PC-9 (cell line): ENCODE measurements at regions of chr3 and their contacts with region 1.

Region 1: DNA sequence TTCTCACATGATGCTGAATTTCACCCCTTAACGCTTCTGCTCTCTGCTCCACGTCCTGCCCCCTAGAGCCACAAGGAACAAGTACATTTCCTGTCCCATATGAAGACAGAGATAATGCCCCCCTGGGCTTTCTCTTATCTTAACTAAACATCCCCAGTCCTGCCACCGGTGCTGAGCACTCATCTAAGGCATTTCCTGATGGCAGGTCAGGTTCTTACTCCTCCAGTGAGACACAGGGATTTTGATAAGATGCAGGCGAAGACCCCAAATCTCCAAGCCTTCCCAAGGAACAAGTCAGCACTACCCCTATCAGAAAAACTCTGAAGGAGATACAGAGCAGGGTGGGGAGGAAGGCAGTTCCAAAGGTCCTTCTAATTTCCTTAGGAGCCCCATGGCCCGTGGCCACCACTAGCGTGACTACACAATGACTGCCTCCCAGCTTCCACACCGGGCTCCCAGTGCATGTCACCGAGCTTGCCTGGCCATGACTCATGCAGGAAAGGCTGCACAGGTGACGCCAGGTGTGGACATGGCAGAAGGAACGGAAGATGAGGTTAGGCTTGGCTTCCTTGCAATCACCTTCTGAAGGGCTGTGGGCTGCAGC is 152.9 kb downstream of the XXYLT1 start:
- DNase-seq: peak; percentile 94 to 97
- H3K4me3 ChIP-seq: peak overlapping the region; percentile 23; the same call in 1 of the 2 replicates
- H3K27ac ChIP-seq: peak overlapping the region; percentile 82
- H3K4me1 ChIP-seq: peaks cover 51% of the 10 kb centered on the region
- H3K27me3 ChIP-seq: no peaks in the 10 kb centered on the region
- CTCF ChIP-seq: peak; percentile 63

Region 2: GRCh38 chr3:194486540-194487288 is 631.4 kb before region 1 on chr3 and contains the start of gene ATP13A3:
- CTCF ChIA-PET with region 1: no interaction called
- POLR2A ChIA-PET with region 1: interaction called, 11 read pairs
- intact Hi-C with region 1: no loop called
- DNase-seq: peak; percentile 80 to 93
- H3K4me3 ChIP-seq: peak within 1 kb of the TSS; percentile 64
- H3K27ac ChIP-seq: peak within 1 kb of the TSS; percentile 96
- H3K4me1 ChIP-seq: peaks cover 71% of the 10 kb centered on the region
- H3K27me3 ChIP-seq: no peaks in the 10 kb centered on the region
- CTCF ChIP-seq: no peak
- total RNA-seq, gene ATP13A3: 203 and 242 TPM in 2 replicates

Region 3: GRCh38 chr3:194938804-194939534 is 179.1 kb before region 1 on chr3:
- CTCF ChIA-PET with region 1: no interaction called
- POLR2A ChIA-PET with region 1: interaction called, 15 read pairs
- intact Hi-C with region 1: no loop called
- DNase-seq: no peak
- H3K4me3 ChIP-seq: no peak overlapping the region
- H3K27ac ChIP-seq: no peak overlapping the region
- H3K4me1 ChIP-seq: peaks cover 12% of the 10 kb centered on the region
- H3K27me3 ChIP-seq: no peaks in the 10 kb centered on the region
- CTCF ChIP-seq: no peak

Region 4: DNA sequence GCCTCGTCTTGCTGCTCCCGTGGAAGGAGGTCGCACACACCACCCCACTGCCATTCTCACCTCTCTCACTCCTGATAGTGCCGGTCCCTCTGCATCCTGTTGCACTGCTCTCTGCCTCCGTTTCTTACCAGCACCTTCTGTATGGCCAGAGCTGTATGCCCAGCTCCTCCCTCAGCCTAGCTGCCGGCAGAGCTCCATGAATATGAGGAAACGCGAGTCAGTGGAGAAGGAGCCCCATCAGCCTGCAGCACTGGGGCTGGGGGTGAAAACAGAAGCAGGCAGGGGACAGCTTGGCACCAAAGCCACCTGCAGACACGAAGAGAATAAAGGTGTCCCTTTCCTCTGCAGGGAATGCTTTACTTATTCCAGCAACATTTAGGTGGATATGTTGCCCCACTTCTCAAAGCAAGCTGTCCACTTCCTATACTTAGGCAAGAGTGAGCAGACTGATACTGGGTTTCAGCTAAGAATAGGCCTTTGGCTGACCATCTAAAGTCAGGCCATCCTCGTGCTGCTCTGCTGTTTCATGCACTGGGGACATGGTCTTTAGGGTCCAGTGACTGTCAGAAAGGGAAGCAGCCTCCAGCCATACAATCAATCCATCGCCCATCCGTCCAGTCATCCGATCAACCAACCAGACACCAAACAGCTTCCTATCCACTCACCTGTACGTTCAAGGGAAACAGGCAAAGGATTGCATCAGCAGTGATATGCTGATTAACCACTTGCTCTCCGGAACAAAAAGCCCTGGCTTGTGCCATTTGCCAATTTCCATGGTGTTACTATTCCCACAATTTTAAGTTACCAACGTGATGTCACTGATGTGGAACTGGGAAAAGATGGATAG is 69.8 kb before region 1 on chr3:
- CTCF ChIA-PET with region 1: no interaction called
- POLR2A ChIA-PET with region 1: interaction called, 26 read pairs
- intact Hi-C with region 1: no loop called
- DNase-seq: peak in 1 of 2 experiments; percentile 5
- H3K4me3 ChIP-seq: no peak overlapping the region
- H3K27ac ChIP-seq: no peak overlapping the region
- H3K4me1 ChIP-seq: no peaks in the 10 kb centered on the region
- H3K27me3 ChIP-seq: no peaks in the 10 kb centered on the region
- CTCF ChIP-seq: no peak

Region 5: DNA sequence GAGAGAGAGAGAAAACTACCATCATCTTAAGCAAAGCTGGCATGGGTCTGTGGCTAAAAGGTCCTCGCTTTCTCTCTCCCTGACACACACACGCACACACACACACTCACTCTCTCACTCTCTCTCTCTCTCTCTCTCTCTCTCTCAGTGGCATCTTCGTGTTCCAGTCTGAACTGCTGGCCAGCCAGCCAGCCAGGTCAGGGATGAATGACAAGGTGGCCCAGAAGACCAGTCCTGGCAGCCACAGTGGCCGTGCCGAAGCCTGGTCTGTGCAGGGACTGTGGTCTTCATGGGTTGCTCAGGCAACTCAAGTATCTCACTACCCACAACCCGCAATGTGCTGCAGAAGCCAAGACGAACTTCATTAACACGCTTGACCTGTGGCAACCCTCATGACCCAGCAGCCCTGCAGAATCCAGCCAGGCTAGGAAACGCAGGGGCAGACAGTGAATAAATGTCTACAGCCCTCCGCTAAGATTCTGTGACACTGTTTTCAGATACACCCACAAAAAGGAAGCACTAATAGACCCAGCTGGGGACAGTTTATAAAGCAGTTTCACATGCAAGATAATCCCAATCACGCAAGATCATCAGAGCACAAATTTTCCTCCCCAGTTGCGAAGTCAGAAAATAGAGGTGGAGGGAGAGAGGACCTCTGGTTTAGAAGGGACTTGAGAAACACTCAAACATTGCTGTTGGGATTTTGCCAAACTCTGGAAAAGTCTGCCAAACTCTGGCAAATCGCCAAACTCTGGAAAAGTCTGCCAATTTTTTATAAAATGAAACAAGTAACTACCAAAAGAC is 86.5 kb after region 1 on chr3:
- CTCF ChIA-PET with region 1: no interaction called
- POLR2A ChIA-PET with region 1: no interaction called
- intact Hi-C with region 1: loop called (anchors 1 kb)
- DNase-seq: no peak
- H3K4me3 ChIP-seq: no peak overlapping the region
- H3K27ac ChIP-seq: no peak overlapping the region
- H3K4me1 ChIP-seq: 0 out of 2 replicates have a peak, but pooled peaks cover 9% of the 10 kb centered on the region
- H3K27me3 ChIP-seq: no peaks in the 10 kb centered on the region
- CTCF ChIP-seq: no peak

Region 6: DNA sequence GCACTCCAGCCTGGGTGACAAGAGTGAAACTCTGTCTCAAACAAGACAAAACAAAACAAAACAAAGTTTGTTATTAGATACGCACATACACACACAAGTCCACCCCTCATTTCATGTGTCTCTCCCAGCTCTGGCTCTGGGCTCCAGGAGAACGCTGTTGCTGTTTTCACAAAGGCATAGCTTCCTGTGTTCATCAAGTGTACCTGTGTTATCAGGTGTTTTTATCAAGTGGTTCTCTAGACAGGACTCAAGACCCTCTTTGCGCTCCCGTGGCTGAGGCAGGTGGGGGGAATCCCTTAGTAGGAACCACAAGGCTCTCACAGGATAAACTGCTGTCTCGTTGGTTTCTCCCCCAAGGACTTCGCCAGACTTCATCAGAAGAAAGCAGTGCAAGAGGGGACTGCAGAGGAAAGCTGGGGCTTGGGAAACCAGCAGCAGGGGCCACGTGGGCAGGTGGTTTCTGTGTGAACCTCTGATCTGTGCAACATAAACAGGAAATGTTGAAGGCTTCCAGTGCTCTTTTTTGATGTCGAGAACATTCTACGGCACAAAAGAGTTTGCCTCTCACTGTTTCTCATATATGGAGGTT is 431.9 kb after region 1 on chr3:
- CTCF ChIA-PET with region 1: no interaction called
- POLR2A ChIA-PET with region 1: no interaction called
- intact Hi-C with region 1: no loop called
- DNase-seq: peak in 1 of 2 experiments; percentile 25
- H3K4me3 ChIP-seq: no peak overlapping the region
- H3K27ac ChIP-seq: no peak overlapping the region
- H3K4me1 ChIP-seq: peaks cover 33% of the 10 kb centered on the region
- H3K27me3 ChIP-seq: no peaks in the 10 kb centered on the region
- CTCF ChIP-seq: no peak

Region 7: DNA sequence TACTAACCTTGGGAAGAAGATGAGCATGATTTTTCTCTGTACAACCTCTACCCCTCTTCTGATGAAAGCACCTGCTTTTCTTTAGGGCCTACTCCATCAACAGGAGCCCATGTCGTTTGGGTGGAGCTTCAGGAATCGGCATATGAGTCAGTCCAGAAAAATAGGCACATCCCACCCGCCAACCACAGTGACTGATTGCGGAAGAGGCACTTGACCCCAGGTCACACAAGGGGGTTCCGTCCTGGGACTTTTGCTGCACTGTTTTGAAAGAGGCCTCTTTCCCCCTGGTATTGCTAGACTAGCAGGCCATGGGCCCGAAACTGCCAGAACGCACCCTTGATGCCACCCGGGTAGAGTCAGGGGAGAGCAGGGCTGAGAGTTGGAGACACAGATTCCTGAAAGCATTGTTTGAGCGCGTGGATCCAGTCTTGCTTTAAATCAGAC is 1502.1 kb after region 1 on chr3:
- CTCF ChIA-PET with region 1: no interaction called
- POLR2A ChIA-PET with region 1: no interaction called
- intact Hi-C with region 1: no loop called
- DNase-seq: peak in 1 of 2 experiments; percentile 34
- H3K4me3 ChIP-seq: no peak overlapping the region
- H3K27ac ChIP-seq: no peak overlapping the region
- H3K4me1 ChIP-seq: no peaks in the 10 kb centered on the region
- H3K27me3 ChIP-seq: no peaks in the 10 kb centered on the region
- CTCF ChIP-seq: no peak